ENCODE measurements at regions of chr2 and their contacts with region 1.

Region 1: DNA sequence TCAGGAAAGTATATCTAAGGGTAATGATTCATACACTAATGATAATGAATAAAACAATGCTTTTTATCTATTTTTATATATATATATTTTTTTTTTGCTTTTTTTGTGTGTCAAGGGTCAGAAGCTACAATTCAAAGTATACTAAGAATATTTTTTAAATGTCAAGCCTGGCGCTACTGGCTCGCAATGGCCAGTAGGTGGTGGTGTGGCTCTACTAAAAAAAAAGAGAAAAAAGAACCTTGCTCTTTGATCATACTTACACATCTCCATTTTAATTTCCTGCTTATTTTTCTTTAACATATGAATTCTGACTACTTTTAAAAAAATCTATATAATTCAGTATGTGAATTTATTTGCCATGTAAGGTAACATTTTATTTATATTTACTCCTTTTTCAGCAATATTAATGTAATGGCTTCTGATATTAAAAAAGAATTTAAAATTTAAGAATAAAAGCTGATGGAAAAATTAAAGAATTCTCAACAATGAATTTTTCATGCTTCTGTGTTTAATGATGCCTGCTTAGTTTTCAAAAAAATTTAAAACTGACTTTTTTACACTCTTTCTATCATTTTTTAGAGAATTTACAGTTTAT is 232.9 kb downstream of the GULP1 start:
- DNase-seq: peak; percentile 10
- H3K4me3 ChIP-seq: no peak overlapping the region
- H3K27ac ChIP-seq: peak overlapping the region in 2 of 4 donors; percentile 1 to 63
- H3K4me1 ChIP-seq: peaks cover 0 to 26% (median 5%) of the 10 kb centered on the region in 4 donors
- H3K27me3 ChIP-seq: no peaks in the 10 kb centered on the region
- CTCF ChIP-seq: peak; percentile 64 to 80 (median 78)
- EP300 ChIP-seq: no peak
- POLR2A ChIP-seq: no peak

Region 2: GRCh38 chr2:187581125-187581896 is 943.3 kb before region 1 on chr2:
- in situ Hi-C with region 1: loop called (anchors 25 kb)
- intact Hi-C with region 1: no loop called
- DNase-seq: no peak
- H3K4me3 ChIP-seq: peak overlapping the region in 1 of 4 donors; percentile 27
- H3K27ac ChIP-seq: no peak overlapping the region
- H3K4me1 ChIP-seq: peaks cover 0 to 15% (median 4%) of the 10 kb centered on the region in 4 donors
- H3K27me3 ChIP-seq: no peaks in the 10 kb centered on the region
- CTCF ChIP-seq: peak; percentile 60 to 73 (median 66)
- EP300 ChIP-seq: no peak
- POLR2A ChIP-seq: no peak

Region 3: GRCh38 chr2:188788621-188789020 is 264.0 kb after region 1 on chr2:
- in situ Hi-C with region 1: loop called in 1 of 4 experiments (anchors 10 kb)
- intact Hi-C with region 1: loop called (anchors 10 kb)
- DNase-seq: peak; percentile 48
- H3K4me3 ChIP-seq: no peak overlapping the region
- H3K27ac ChIP-seq: peak overlapping the region; percentile 79 to 86 (median 85)
- H3K4me1 ChIP-seq: peaks cover 0 to 29% (median 1%) of the 10 kb centered on the region in 4 donors
- H3K27me3 ChIP-seq: no peaks in the 10 kb centered on the region
- CTCF ChIP-seq: no peak
- EP300 ChIP-seq: no peak
- POLR2A ChIP-seq: no peak

Region 4: DNA sequence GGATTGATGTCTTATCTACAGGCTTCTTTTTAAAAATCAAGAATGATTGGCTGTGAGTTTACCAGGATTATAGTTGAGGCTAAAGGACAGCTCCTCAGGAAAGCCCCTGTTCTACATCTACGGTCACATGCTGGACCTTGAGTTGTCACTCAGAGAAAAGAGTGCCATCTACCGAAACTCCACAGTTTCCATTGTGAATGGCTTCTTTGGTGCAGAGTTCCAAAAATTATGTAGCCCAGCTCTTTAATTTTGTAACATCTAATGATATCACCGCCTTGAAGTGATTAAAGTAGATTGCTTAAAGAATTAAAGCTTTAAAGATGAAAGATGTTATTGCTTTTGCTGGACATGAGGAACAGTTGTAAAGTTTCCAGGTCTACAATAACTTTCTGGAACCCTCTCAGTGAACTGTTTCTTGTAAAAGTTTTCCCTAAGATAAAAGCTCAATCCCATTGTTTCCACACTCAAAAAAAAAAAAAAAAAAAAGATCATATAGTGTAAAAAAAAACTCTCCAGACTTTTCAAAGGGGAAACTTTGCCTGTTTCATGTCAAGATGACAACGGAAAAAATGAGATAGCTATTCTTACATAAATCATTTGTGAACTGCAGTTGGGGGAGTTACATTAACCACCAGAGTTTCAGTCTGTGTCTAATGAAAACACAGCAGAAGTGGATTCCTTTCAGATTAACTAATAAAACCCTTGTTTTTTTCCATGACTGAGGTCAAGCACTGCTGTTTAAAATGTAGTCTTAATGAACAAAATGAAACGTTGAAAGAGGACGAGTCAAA is 453.9 kb after region 1 on chr2:
- in situ Hi-C with region 1: loop called in 3 of 4 experiments (anchors 5 to 10 kb)
- intact Hi-C with region 1: loop called (anchors 5 kb)
- DNase-seq: no peak
- H3K4me3 ChIP-seq: peak overlapping the region in 3 of 4 donors; percentile 30 to 53 (median 45)
- H3K27ac ChIP-seq: peak overlapping the region; percentile 78 to 88 (median 82)
- H3K4me1 ChIP-seq: peaks cover 0 to 25% (median 1%) of the 10 kb centered on the region in 4 donors
- H3K27me3 ChIP-seq: no peaks in the 10 kb centered on the region
- CTCF ChIP-seq: peak in 2 of 5 experiments; percentile 12 to 18
- EP300 ChIP-seq: no peak
- POLR2A ChIP-seq: no peak

Region 5: DNA sequence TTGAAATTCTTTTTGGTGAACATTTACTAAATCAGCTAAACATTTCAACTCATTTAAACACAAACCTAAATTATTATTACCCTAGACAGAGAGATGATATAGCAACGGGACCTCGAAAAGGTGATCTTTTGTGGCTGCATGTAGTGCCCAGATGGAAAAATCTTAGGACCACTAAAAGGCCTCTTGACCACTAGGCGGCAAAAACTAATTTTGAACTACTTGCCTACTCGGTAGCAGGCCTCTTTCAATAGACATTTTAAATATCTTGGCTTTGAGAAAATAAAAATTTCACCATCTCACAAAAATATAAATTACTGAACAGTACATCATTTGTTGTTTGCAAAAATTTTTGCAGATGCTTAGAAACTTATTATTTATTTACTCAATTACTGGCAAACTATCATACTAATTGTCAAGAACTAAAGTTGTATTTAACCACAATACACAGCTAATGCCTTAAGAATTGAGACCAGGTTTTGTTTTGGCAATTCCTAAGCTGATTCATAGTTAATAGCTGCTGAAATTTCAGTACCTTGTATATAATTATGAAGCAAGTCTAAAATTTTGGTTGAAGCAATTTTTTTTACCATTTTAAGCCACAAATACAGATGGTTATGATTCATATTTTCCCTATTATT is 458.9 kb after region 1 on chr2:
- in situ Hi-C with region 1: loop called in 3 of 4 experiments (anchors 5 to 10 kb)
- intact Hi-C with region 1: loop called (anchors 5 kb)
- DNase-seq: no peak
- H3K4me3 ChIP-seq: peak overlapping the region in 1 of 4 donors; percentile 7
- H3K27ac ChIP-seq: peak overlapping the region; percentile 67 to 88 (median 78)
- H3K4me1 ChIP-seq: peaks cover 0 to 16% (median 1%) of the 10 kb centered on the region in 4 donors
- H3K27me3 ChIP-seq: no peaks in the 10 kb centered on the region
- CTCF ChIP-seq: peak in 4 of 5 experiments; percentile 17 to 49 (median 23)
- EP300 ChIP-seq: no peak
- POLR2A ChIP-seq: no peak

Region 6: GRCh38 chr2:189287982-189288521 is 763.4 kb after region 1 on chr2:
- in situ Hi-C with region 1: loop called in 1 of 4 experiments (anchors 10 kb)
- intact Hi-C with region 1: no loop called
- DNase-seq: no peak
- H3K4me3 ChIP-seq: no peak overlapping the region
- H3K27ac ChIP-seq: peak overlapping the region in 2 of 4 donors; percentile 14 to 28
- H3K4me1 ChIP-seq: peaks cover 0 to 13% (median 1%) of the 10 kb centered on the region in 4 donors
- H3K27me3 ChIP-seq: no peaks in the 10 kb centered on the region
- CTCF ChIP-seq: peak; percentile 35 to 56 (median 42)
- EP300 ChIP-seq: no peak
- POLR2A ChIP-seq: no peak

Region 7: GRCh38 chr2:189412330-189412953 is 887.8 kb after region 1 on chr2:
- in situ Hi-C with region 1: loop called in 3 of 4 experiments (anchors 10 to 25 kb)
- intact Hi-C with region 1: no loop called
- DNase-seq: peak; percentile 21
- H3K4me3 ChIP-seq: no peak overlapping the region
- H3K27ac ChIP-seq: peak overlapping the region; percentile 66 to 76 (median 70)
- H3K4me1 ChIP-seq: peaks cover 0 to 16% (median 8%) of the 10 kb centered on the region in 4 donors
- H3K27me3 ChIP-seq: no peaks in the 10 kb centered on the region
- CTCF ChIP-seq: peak; percentile 70 to 87 (median 71)
- EP300 ChIP-seq: no peak
- POLR2A ChIP-seq: no peak

Measured in transverse colon (tissue), 4 donors.